Mammary epithelial cell (primary cell): ENCODE measurements at regions of chr12 and their contacts with region 1.

Region 1: GRCh38 chr12:2884810-2885209 is 5.9 kb upstream of the TULP3 start:
- DNase-seq: no peak
- H3K4me3 ChIP-seq: no peak overlapping the region
- H3K27ac ChIP-seq: no peak overlapping the region
- H3K4me1 ChIP-seq: no peaks in the 10 kb centered on the region
- H3K27me3 ChIP-seq: no peaks in the 10 kb centered on the region
- CTCF ChIP-seq: no peak

Region 2: GRCh38 chr12:2627840-2628201 is 257.0 kb before region 1 on chr12:
- CTCF ChIA-PET with region 1: no interaction called
- dilution Hi-C with region 1: no loop called
- in situ Hi-C with region 1: no loop called
- intact Hi-C with region 1: no loop called
- DNase-seq: no peak
- H3K4me3 ChIP-seq: no peak overlapping the region
- H3K27ac ChIP-seq: no peak overlapping the region
- H3K4me1 ChIP-seq: no peaks in the 10 kb centered on the region
- H3K27me3 ChIP-seq: no peaks in the 10 kb centered on the region
- CTCF ChIP-seq: no peak

Region 3: GRCh38 chr12:2722806-2723205 is 162.0 kb before region 1 on chr12:
- CTCF ChIA-PET with region 1: no interaction called
- dilution Hi-C with region 1: no loop called
- in situ Hi-C with region 1: no loop called
- intact Hi-C with region 1: no loop called
- DNase-seq: peak; percentile 64
- H3K4me3 ChIP-seq: no peak overlapping the region
- H3K27ac ChIP-seq: no peak overlapping the region
- H3K4me1 ChIP-seq: no peaks in the 10 kb centered on the region
- H3K27me3 ChIP-seq: no peaks in the 10 kb centered on the region
- CTCF ChIP-seq: no peak

Region 4: DNA sequence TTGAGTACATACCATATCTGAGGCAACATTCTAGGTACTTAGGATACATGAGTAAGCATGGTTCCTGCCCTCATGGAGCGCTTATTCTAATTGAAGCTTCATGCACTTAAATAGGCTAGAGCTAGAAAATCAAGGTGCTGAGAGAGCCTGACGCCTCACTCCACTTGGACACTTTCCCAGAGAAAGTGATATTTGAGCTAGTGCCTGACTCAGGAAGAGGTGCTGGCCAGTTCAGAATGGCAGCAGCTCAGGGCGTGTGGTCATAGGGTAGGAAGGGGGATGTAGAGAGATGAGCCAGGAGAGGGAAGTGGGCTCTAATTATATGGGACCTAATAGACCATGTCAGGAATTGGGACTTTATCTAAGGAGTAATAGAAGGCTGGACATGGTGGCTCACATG is 39.2 kb after region 1 on chr12:
- CTCF ChIA-PET with region 1: no interaction called
- dilution Hi-C with region 1: loop called (anchors 5 kb)
- in situ Hi-C with region 1: no loop called
- intact Hi-C with region 1: no loop called
- DNase-seq: peak; percentile 12
- H3K4me3 ChIP-seq: no peak overlapping the region
- H3K27ac ChIP-seq: no peak overlapping the region
- H3K4me1 ChIP-seq: peaks cover 12% of the 10 kb centered on the region
- H3K27me3 ChIP-seq: no peaks in the 10 kb centered on the region
- CTCF ChIP-seq: no peak

Region 5: GRCh38 chr12:2944401-2945047 is 59.7 kb after region 1 on chr12:
- CTCF ChIA-PET with region 1: interaction called, 6 read pairs
- dilution Hi-C with region 1: no loop called
- in situ Hi-C with region 1: loop called in 1 of 2 experiments (anchors 10 kb)
- intact Hi-C with region 1: loop called (anchors 1 kb)
- DNase-seq: peak; percentile 46
- H3K4me3 ChIP-seq: peak overlapping the region in 1 of 3 experiments; percentile 24
- H3K27ac ChIP-seq: no peak overlapping the region
- H3K4me1 ChIP-seq: no peaks in the 10 kb centered on the region
- H3K27me3 ChIP-seq: no peaks in the 10 kb centered on the region
- CTCF ChIP-seq: peak; percentile 91 to 92

Region 6: GRCh38 chr12:2988494-2988893 is 103.7 kb after region 1 on chr12:
- CTCF ChIA-PET with region 1: no interaction called
- dilution Hi-C with region 1: loop called (anchors 5 kb)
- in situ Hi-C with region 1: no loop called
- intact Hi-C with region 1: no loop called
- DNase-seq: no peak
- H3K4me3 ChIP-seq: no peak overlapping the region
- H3K27ac ChIP-seq: no peak overlapping the region
- H3K4me1 ChIP-seq: no peaks in the 10 kb centered on the region
- H3K27me3 ChIP-seq: no peaks in the 10 kb centered on the region
- CTCF ChIP-seq: no peak

Region 7: DNA sequence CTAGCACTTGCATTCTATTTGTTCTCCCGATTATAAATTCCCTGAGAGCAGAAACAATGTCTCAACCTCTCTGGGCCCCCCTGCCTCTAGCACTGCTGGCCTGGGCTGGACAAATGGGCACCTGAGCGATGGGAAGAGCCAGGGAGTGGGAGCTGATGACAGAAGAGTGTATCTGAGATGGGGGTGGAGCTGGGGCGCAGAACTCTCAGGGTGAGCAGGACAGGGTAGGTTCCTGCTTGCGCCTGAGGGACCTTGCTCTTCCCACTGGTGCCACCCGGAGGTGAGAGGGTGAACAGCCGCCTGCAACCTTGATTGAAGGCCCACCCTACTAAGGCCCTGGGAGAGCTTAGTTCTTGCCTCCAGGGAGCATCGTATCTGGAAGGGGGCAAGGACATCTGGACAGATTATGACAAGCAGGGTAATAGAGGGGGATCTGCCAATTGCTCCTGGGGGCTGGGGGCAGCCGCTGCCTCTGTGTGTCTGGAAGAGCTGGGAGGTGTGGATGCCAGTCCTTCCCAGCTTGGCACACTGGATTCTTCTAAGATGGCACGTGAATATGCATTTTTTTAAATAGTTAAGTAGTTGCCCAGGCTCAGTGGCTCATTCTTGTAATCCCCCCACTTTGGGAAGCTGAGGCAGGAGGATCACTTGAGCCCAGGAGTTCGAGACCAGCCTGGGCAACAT is 149.4 kb after region 1 on chr12:
- CTCF ChIA-PET with region 1: interaction called, 3 read pairs
- dilution Hi-C with region 1: no loop called
- in situ Hi-C with region 1: loop called in 1 of 2 experiments (anchors 25 kb)
- intact Hi-C with region 1: loop called (anchors 1 kb)
- DNase-seq: peak; percentile 46
- H3K4me3 ChIP-seq: no peak overlapping the region
- H3K27ac ChIP-seq: no peak overlapping the region
- H3K4me1 ChIP-seq: no peaks in the 10 kb centered on the region
- H3K27me3 ChIP-seq: no peaks in the 10 kb centered on the region
- CTCF ChIP-seq: peak; percentile 63 to 71

Region 8: DNA sequence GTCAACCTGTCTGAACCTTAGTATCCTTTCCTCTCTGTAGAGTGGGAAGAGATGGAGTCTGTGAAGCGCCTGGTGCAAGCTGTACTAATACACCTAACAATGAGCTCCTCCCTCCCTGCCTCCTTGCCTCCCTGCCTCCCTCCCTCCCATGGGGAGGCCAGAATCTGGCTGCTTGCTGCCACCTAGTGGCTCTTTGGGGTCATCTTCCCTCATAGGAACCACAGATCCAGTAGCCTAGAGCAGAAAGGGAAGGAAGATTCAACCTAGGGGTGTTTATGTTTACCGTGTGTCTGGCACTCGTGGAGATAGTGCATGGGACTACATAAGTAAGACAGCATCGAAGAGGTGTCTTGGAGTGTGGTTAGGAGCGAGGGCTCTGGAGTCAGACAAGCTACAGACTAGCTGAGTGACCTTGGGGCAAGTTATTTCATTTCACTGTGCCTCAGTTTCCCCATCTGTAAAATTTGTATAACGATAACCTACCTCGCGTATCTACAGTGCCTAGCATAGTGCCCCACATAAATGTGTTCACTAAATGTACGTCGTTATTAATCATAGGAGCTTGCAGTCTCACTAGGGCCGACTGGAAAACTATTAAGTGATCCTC is 156.9 kb after region 1 on chr12:
- CTCF ChIA-PET with region 1: interaction called, 11 read pairs
- dilution Hi-C with region 1: no loop called
- in situ Hi-C with region 1: loop called in 1 of 2 experiments (anchors 25 kb)
- intact Hi-C with region 1: no loop called
- DNase-seq: peak; percentile 69
- H3K4me3 ChIP-seq: no peak overlapping the region
- H3K27ac ChIP-seq: no peak overlapping the region
- H3K4me1 ChIP-seq: no peaks in the 10 kb centered on the region
- H3K27me3 ChIP-seq: no peaks in the 10 kb centered on the region
- CTCF ChIP-seq: peak; percentile 59 to 75